ENCODE measurements at regions of chrX and their contacts with region 1.

Region 1: GRCh38 chrX:130060122-130061069 is 49.9 kb downstream of the ELF4 start:
- DNase-seq: peak; percentile 78
- H3K4me3 Mint-ChIP-seq: peak overlapping the region; percentile 73
- H3K27ac Mint-ChIP-seq: peak overlapping the region; percentile 44
- H3K4me1 Mint-ChIP-seq: no peaks in the 10 kb centered on the region
- H3K27me3 Mint-ChIP-seq: peaks cover 2% of the 10 kb centered on the region

Region 2: GRCh38 chrX:129600981-129601424 is 459.4 kb before region 1 on chrX:
- intact Hi-C with region 1: loop called (anchors 1 kb)
- DNase-seq: no peak
- H3K4me3 Mint-ChIP-seq: no peak overlapping the region
- H3K27ac Mint-ChIP-seq: no peak overlapping the region
- H3K4me1 Mint-ChIP-seq: peaks cover 19% of the 10 kb centered on the region
- H3K27me3 Mint-ChIP-seq: peaks cover 2% of the 10 kb centered on the region

Region 3: GRCh38 chrX:129925305-129926092 is 134.9 kb before region 1 on chrX:
- intact Hi-C with region 1: loop called (anchors 1 kb)
- DNase-seq: peak; percentile 56
- H3K4me3 Mint-ChIP-seq: no peak overlapping the region
- H3K27ac Mint-ChIP-seq: no peak overlapping the region
- H3K4me1 Mint-ChIP-seq: peaks cover 8% of the 10 kb centered on the region
- H3K27me3 Mint-ChIP-seq: no peaks in the 10 kb centered on the region

Region 4: GRCh38 chrX:129931411-129932015 is 128.9 kb before region 1 on chrX:
- intact Hi-C with region 1: loop called (anchors 1 kb)
- DNase-seq: peak; percentile 52
- H3K4me3 Mint-ChIP-seq: peak overlapping the region; percentile 81
- H3K27ac Mint-ChIP-seq: peak overlapping the region; percentile 80
- H3K4me1 Mint-ChIP-seq: peaks cover 5% of the 10 kb centered on the region
- H3K27me3 Mint-ChIP-seq: peaks cover 9% of the 10 kb centered on the region

Region 5: GRCh38 chrX:130024127-130024526 is 36.3 kb before region 1 on chrX:
- intact Hi-C with region 1: loop called (anchors 1 kb)
- DNase-seq: peak; percentile 78
- H3K4me3 Mint-ChIP-seq: peak overlapping the region; percentile 60
- H3K27ac Mint-ChIP-seq: peak overlapping the region; percentile 44
- H3K4me1 Mint-ChIP-seq: peaks cover 14% of the 10 kb centered on the region
- H3K27me3 Mint-ChIP-seq: no peaks in the 10 kb centered on the region

Region 6: GRCh38 chrX:130468395-130468923 is 408.1 kb after region 1 on chrX:
- intact Hi-C with region 1: no loop called
- DNase-seq: no peak
- H3K4me3 Mint-ChIP-seq: no peak overlapping the region
- H3K27ac Mint-ChIP-seq: no peak overlapping the region
- H3K4me1 Mint-ChIP-seq: no peaks in the 10 kb centered on the region
- H3K27me3 Mint-ChIP-seq: peaks cover 2% of the 10 kb centered on the region